H1 (cell line): ENCODE measurements at regions of chr14 and their contacts with region 1.

Region 1: GRCh38 chr14:94485944-94486841 is 10.2 kb upstream of the SERPINA9 start:
- DNase-seq: peak; percentile 59 to 94
- H3K4me3 ChIP-seq: peak overlapping the region in 3 of 4 experiments; percentile 20 to 55 (median 43); a peak in 6 of 8 replicates
- H3K27ac ChIP-seq: no peak overlapping the region; the same call in 1 of the 2 replicates
- H3K4me1 ChIP-seq: peaks cover 0 to 14% (median 11%) of the 10 kb centered on the region in 4 experiments; a peak in 6 of 7 replicates
- H3K27me3 ChIP-seq: no peaks in the 10 kb centered on the region
- CTCF ChIP-seq: peak; percentile 93 to 96 (median 96)
- EP300 ChIP-seq: no peak
- POLR2A ChIP-seq: no peak
- RAD21 ChIP-seq: peak; percentile 92 to 94

Region 2: DNA sequence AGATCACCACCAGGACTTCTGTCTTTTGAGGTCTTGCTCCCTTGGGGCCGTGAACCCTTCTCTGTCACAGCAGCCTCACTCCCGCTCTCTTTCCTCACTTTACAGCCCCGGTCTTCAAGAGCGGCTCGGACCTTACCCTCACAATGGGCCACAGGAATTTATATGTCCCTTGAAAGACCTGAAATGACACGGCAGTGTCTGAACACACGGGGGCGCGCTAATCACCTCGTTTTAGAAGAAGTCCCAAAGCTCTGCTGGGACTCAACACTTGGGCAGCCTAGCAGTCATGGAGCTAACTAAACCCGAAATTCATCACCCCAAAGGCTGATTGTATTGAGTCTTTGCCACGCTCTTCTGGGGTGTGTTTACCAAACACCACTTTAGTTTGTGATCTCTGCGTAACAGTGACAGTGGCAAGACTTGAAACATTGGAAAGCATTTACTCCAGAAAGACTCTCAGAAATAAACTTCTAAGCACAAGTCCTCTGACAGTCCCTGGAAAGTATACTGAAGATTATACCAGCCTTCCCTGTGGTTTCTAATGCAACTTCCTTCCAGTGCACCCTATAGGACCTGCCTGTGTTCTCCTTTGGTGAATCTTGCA is 62.6 kb before region 1 on chr14:
- CTCF ChIA-PET with region 1: interaction called, 41 read pairs
- POLR2A ChIA-PET with region 1: interaction called, 4 read pairs
- DNase-seq: peak; percentile 67 to 88
- H3K4me3 ChIP-seq: no peak overlapping the region
- H3K27ac ChIP-seq: no peak overlapping the region
- H3K4me1 ChIP-seq: 0 out of 7 replicates have a peak, but pooled peaks cover 0 to 2% (median 0%) of the 10 kb centered on the region in 4 experiments
- H3K27me3 ChIP-seq: no peaks in the 10 kb centered on the region
- CTCF ChIP-seq: peak; percentile 62 to 88 (median 83)
- EP300 ChIP-seq: no peak
- POLR2A ChIP-seq: no peak
- RAD21 ChIP-seq: peak; percentile 72 to 80

Region 3: GRCh38 chr14:94439453-94440057 is 46.6 kb before region 1 on chr14:
- CTCF ChIA-PET with region 1: interaction called, 78 read pairs
- POLR2A ChIA-PET with region 1: no interaction called
- DNase-seq: no peak
- H3K4me3 ChIP-seq: no peak overlapping the region
- H3K27ac ChIP-seq: no peak overlapping the region
- H3K4me1 ChIP-seq: no peaks in the 10 kb centered on the region
- H3K27me3 ChIP-seq: no peaks in the 10 kb centered on the region; a peak in 1 of 7 replicates
- CTCF ChIP-seq: peak; percentile 22 to 40 (median 23); a peak in 3 of 4 replicates
- EP300 ChIP-seq: no peak
- POLR2A ChIP-seq: no peak
- RAD21 ChIP-seq: no peak; a peak in 1 of 4 replicates

Region 4: GRCh38 chr14:94460631-94461416 is 25.4 kb before region 1 on chr14:
- CTCF ChIA-PET with region 1: interaction called, 27 read pairs
- POLR2A ChIA-PET with region 1: no interaction called
- DNase-seq: no peak
- H3K4me3 ChIP-seq: no peak overlapping the region
- H3K27ac ChIP-seq: no peak overlapping the region
- H3K4me1 ChIP-seq: no peaks in the 10 kb centered on the region; a peak in 1 of 7 replicates
- H3K27me3 ChIP-seq: no peaks in the 10 kb centered on the region
- CTCF ChIP-seq: no peak
- EP300 ChIP-seq: no peak
- POLR2A ChIP-seq: no peak
- RAD21 ChIP-seq: no peak

Region 5: DNA sequence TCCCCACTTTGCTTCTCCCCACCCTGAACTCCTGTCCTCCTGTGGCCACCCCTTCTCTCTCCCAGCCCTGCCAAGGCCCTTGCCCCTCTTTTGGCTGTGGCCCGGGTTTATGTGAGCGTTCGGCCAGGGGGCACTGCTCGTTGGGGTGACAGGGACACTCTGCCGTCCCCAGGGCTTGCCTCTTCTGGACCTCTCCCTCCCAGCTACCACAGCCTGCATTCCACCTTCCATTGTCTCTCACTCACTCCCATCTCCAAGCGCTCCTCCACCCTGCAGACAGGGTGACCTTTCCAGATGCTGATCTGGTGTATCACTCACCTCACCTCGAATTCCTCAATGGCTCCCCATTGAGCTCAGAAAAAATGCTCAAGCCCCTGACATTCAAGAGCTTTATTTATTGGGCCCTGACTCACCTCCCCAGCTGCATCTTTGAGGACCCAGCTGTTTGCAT is 11.6 kb before region 1 on chr14:
- CTCF ChIA-PET with region 1: interaction called, 51 read pairs
- POLR2A ChIA-PET with region 1: interaction called, 3 read pairs
- DNase-seq: peak in 1 of 2 experiments; percentile 27
- H3K4me3 ChIP-seq: no peak overlapping the region
- H3K27ac ChIP-seq: no peak overlapping the region
- H3K4me1 ChIP-seq: peaks cover 0 to 5% (median 1%) of the 10 kb centered on the region in 4 experiments; a peak in 3 of 7 replicates
- H3K27me3 ChIP-seq: no peaks in the 10 kb centered on the region; a peak in 1 of 7 replicates
- CTCF ChIP-seq: no peak
- EP300 ChIP-seq: no peak
- POLR2A ChIP-seq: no peak
- RAD21 ChIP-seq: no peak

Region 6: GRCh38 chr14:94517641-94518257 is 31.6 kb after region 1 on chr14:
- CTCF ChIA-PET with region 1: interaction called, 10 read pairs
- POLR2A ChIA-PET with region 1: no interaction called
- DNase-seq: no peak
- H3K4me3 ChIP-seq: no peak overlapping the region
- H3K27ac ChIP-seq: no peak overlapping the region
- H3K4me1 ChIP-seq: peaks cover 0 to 12% (median 3%) of the 10 kb centered on the region in 4 experiments; a peak in 4 of 7 replicates
- H3K27me3 ChIP-seq: no peaks in the 10 kb centered on the region
- CTCF ChIP-seq: no peak
- EP300 ChIP-seq: no peak
- POLR2A ChIP-seq: no peak
- RAD21 ChIP-seq: no peak

Region 7: DNA sequence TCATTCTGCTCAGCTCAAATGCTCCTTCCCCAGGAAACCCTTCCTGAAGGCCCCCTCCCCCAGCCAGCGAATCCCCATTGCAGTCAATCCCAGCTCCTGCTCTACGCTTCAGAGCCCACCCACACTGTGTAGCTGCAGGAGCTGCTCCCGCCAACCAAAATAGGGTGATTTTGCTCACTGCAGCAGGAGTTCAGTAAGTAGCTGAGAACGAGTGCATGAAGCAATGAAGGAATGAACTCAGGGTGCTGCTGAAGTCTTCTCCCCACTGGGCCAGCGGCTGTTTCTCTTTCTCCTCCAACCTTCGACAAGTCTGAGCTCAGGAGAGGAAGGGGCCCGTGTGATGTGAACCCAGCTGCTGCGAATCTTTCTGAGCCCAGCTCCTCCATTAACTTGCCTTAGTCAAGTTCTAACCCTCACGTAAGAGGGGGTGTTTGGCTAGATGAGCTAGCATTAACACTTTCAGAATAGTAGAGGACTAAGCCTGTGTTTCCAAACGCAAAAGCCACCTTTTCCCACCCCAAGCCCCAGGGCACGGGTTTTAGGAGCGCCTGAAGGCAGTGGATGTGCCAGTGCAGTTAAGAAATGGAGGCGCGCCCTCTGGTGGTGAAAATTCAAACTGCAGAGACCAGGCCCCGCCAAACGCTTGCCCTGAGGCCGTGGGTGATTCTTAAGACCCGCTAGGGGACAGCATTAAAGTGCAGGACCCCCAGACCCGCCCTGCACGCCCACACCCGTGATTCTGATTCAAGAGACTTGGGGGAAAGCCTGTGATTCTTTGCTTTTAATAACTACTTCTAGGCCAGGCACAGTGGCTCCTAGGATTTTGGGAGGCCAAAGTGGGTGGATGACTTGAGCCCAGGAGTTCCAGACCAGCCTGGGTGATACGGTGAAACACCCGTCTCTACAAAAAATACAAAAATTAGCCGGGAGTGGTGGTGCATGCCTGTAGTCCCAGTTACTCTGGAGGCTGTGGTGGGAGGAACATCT is 63.1 kb after region 1 on chr14:
- CTCF ChIA-PET with region 1: interaction called, 56 read pairs
- POLR2A ChIA-PET with region 1: no interaction called
- DNase-seq: peak; percentile 80 to 98
- H3K4me3 ChIP-seq: no peak overlapping the region
- H3K27ac ChIP-seq: no peak overlapping the region
- H3K4me1 ChIP-seq: peaks cover 0 to 8% (median 5%) of the 10 kb centered on the region in 4 experiments
- H3K27me3 ChIP-seq: no peaks in the 10 kb centered on the region
- CTCF ChIP-seq: peak; percentile 78 to 90 (median 86)
- EP300 ChIP-seq: no peak
- POLR2A ChIP-seq: no peak
- RAD21 ChIP-seq: peak; percentile 85 to 90